ENCODE measurements at regions of chr7 and their contacts with region 1.

Region 1: DNA sequence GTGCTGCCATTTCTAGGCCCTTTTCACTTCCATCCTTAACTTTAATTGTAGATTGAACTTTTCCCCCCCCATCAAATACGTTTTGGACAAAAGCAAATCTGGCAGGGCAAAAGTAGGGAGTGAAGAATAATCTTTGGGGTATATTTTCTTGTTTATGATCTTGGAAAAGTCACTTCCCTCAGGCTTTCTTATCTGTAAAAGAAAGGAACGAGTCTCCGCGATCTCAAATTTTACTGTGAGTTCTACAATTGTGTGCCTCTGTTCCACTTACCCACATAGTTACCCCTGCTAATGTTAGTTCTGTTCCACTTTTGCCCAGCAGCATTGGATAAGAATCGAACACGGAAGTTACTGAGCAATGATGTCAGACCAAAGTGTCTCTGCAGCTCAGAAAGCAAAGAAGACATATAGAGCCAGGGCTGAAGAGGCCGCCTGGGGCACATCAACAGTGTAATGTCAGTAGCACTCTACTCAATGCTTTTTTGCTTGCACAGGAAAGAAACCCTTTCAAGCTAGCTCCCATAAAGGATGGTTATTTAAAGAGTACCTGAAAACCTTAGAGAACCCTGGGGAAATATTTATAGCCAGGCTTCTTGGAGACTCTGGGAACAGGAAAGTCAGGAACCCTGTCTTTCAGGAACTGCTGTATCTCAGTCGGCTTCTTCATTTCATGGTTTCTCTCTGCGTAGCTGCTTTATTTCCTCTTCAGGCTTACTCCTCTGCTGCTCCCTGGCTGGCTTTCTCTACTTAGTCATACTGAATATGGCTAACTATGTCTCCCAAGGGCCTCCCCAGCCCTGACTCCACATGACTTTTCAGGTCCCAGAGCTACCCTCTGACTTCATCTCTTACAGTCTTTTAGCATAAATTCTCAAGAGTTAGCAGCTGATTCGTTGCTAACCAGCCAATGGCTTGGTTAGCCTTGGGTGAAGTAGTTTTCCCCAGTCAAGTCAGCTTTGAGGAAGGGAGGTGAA is 123.7 kb upstream of the FAM3C start:
- DNase-seq: no peak
- H3K4me3 ChIP-seq: no peak overlapping the region
- H3K27ac ChIP-seq: peak overlapping the region in 1 of 4 donors; percentile 14
- H3K4me1 ChIP-seq: peaks cover 0 to 4% (median 0%) of the 10 kb centered on the region in 4 donors
- H3K27me3 ChIP-seq: no peaks in the 10 kb centered on the region
- CTCF ChIP-seq: no peak
- EP300 ChIP-seq: no peak
- POLR2A ChIP-seq: no peak

Region 2: GRCh38 chr7:120920591-120920990 is 599.2 kb before region 1 on chr7:
- in situ Hi-C with region 1: no loop called
- intact Hi-C with region 1: no loop called
- DNase-seq: no peak
- H3K4me3 ChIP-seq: no peak overlapping the region
- H3K27ac ChIP-seq: no peak overlapping the region
- H3K4me1 ChIP-seq: no peaks in the 10 kb centered on the region
- H3K27me3 ChIP-seq: no peaks in the 10 kb centered on the region
- CTCF ChIP-seq: no peak
- EP300 ChIP-seq: no peak
- POLR2A ChIP-seq: no peak

Region 3: GRCh38 chr7:122199141-122199551 is 679.3 kb after region 1 on chr7:
- in situ Hi-C with region 1: no loop called
- intact Hi-C with region 1: loop called (anchors 5 kb)
- DNase-seq: no peak
- H3K4me3 ChIP-seq: no peak overlapping the region
- H3K27ac ChIP-seq: no peak overlapping the region
- H3K4me1 ChIP-seq: no peaks in the 10 kb centered on the region
- H3K27me3 ChIP-seq: no peaks in the 10 kb centered on the region
- CTCF ChIP-seq: no peak
- EP300 ChIP-seq: no peak
- POLR2A ChIP-seq: no peak

Measured in transverse colon (tissue), 4 donors.